Pancreas (tissue), 10 donors: ENCODE measurements at regions of chr10 and their contacts with region 1.

Region 1: GRCh38 chr10:114613237-114613979 is 44.7 kb downstream of the ABLIM1 start:
- DNase-seq: peak in 3 of 6 donors; percentile 62 to 68 (median 63)
- ATAC-seq: peak; percentile 90 to 98 (median 96)
- H3K4me3 ChIP-seq: no peak overlapping the region
- H3K27ac ChIP-seq: peak overlapping the region; percentile 28 to 74 (median 62)
- H3K4me1 ChIP-seq: peaks cover 15 to 27% (median 19%) of the 10 kb centered on the region in 3 donors
- H3K27me3 ChIP-seq: no peaks in the 10 kb centered on the region
- CTCF ChIP-seq: no peak

Region 2: GRCh38 chr10:114520453-114520852 is 93.0 kb before region 1 on chr10:
- intact Hi-C with region 1: no loop called
- DNase-seq: peak in 1 of 6 donors; percentile 25
- ATAC-seq: peak; percentile 65 to 75 (median 67)
- H3K4me3 ChIP-seq: no peak overlapping the region
- H3K27ac ChIP-seq: peak overlapping the region in 3 of 4 donors; percentile 36 to 70 (median 68)
- H3K4me1 ChIP-seq: peaks cover 0 to 11% (median 4%) of the 10 kb centered on the region in 3 donors
- H3K27me3 ChIP-seq: no peaks in the 10 kb centered on the region
- CTCF ChIP-seq: no peak

Region 3: DNA sequence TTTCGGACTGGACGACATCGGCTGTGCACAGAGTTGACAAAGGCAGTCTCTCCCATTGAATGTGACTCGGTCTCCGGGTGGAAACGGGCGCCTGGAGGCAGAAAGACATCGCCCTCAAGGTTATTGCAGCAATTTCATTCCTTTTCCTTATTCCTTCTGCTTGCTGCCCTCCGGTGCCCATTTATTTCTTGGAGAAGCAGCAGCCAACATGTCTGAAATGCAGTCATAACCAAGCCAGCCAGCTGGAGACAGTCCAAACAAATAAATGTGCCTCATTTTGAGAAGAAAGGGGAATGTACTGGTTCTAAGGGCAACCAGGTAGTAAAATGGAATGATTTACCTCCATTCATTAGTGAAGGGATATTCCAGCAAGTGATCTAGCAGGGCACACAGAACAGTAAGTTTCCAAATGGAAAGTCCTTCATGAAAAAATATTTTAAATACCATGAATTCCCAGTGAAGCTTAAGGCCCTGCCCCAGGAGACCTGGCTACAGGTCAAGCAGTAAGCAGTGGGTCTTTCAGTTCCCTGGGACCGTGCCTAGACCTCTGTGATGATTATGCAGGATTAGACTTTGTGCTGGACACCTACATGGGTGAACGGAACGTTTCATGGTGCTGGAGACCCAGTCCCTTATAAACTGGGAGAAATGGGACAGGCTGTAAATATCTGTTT is 42.0 kb before region 1 on chr10:
- intact Hi-C with region 1: loop called in 1 of 3 experiments (anchors 5 kb)
- DNase-seq: peak in 1 of 6 donors; percentile 22
- ATAC-seq: peak; percentile 31 to 61 (median 35)
- H3K4me3 ChIP-seq: no peak overlapping the region
- H3K27ac ChIP-seq: no peak overlapping the region
- H3K4me1 ChIP-seq: peaks cover 0 to under 1% (median 0%) of the 10 kb centered on the region in 3 donors
- H3K27me3 ChIP-seq: no peaks in the 10 kb centered on the region
- CTCF ChIP-seq: no peak